Tibial artery (tissue), 4 donors: ENCODE measurements at regions of chr10 and their contacts with region 1.

Region 1: GRCh38 chr10:129380279-129380678 is 86.8 kb upstream of the MGMT start:
- DNase-seq: no peak
- H3K4me3 ChIP-seq: no peak overlapping the region
- H3K27ac ChIP-seq: no peak overlapping the region
- H3K4me1 ChIP-seq: no peaks in the 10 kb centered on the region
- H3K27me3 ChIP-seq: peaks cover 0 to 3% of the 10 kb centered on the region in 2 donors
- CTCF ChIP-seq: no peak

Region 2: DNA sequence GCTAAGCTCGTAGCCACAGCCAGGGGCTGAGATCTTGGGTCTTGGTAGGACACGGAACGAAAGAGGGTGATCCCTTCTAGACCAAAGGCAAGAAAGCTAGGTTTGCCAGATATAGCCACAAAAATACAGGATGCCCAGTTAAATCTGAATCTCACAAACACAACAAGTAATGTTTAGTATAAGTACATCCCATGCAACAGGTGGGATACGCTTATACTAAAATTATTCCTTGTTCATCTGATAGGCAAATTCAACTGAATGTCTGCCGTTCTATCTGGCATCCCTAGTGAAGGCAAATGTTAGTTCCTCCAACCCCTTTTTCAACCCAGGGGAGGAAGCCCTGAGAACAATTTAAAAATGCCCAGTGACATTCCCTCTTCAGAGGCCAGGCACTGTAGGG is 44.3 kb before region 1 on chr10:
- intact Hi-C with region 1: loop called (anchors 1 kb)
- DNase-seq: no peak
- H3K4me3 ChIP-seq: no peak overlapping the region
- H3K27ac ChIP-seq: no peak overlapping the region
- H3K4me1 ChIP-seq: no peaks in the 10 kb centered on the region
- H3K27me3 ChIP-seq: peaks cover 0 to 13% of the 10 kb centered on the region in 2 donors
- CTCF ChIP-seq: no peak

Region 3: DNA sequence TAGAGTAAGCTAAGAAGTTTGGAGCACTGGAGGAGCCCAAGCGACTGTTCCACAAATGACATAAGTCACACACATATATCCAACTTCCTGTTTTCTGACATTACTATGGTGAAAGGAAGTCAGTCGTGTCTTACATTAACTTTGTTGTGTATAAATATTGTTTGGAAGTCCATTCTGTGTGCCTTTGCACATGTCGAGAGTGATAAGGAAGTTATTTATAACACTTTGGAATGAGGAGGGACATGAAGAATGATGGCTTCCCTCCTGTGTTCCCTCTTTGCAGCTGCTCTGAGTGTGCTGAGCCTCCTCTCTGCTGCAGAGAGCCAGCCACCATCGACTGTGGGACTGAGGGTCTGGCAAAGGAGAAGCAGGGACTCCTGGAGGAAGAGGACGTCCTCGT is 46.3 kb after region 1 on chr10:
- intact Hi-C with region 1: no loop called
- DNase-seq: no peak
- H3K4me3 ChIP-seq: no peak overlapping the region
- H3K27ac ChIP-seq: no peak overlapping the region
- H3K4me1 ChIP-seq: no peaks in the 10 kb centered on the region
- H3K27me3 ChIP-seq: no peaks in the 10 kb centered on the region
- CTCF ChIP-seq: no peak